Activated T-helper 1 cell treated with anti-CD3 and anti-CD28 coated beads, Interleukin-12 subunit alpha, Interleukin-12 subunit beta, Interleukin-2, Interleukin-4 antibody, amounts not matched to agents 30 ng/mL and 10 ng/mL and 1 ng/mL, durations not matched to agents 14 hours and 24 hours and 36 hours (primary cell): ENCODE measurements at regions of chr19 and their contacts with region 1.

Region 1: GRCh38 chr19:53520550-53521372 is 17.2 kb upstream of the ZNF331 start:
- DNase-seq: peak; percentile 81
- H3K4me3 Mint-ChIP-seq: peak overlapping the region; percentile 98
- H3K27ac Mint-ChIP-seq: peak overlapping the region; percentile 84
- H3K4me1 Mint-ChIP-seq: peaks cover 18% of the 10 kb centered on the region
- H3K27me3 Mint-ChIP-seq: no peaks in the 10 kb centered on the region

Region 2: DNA sequence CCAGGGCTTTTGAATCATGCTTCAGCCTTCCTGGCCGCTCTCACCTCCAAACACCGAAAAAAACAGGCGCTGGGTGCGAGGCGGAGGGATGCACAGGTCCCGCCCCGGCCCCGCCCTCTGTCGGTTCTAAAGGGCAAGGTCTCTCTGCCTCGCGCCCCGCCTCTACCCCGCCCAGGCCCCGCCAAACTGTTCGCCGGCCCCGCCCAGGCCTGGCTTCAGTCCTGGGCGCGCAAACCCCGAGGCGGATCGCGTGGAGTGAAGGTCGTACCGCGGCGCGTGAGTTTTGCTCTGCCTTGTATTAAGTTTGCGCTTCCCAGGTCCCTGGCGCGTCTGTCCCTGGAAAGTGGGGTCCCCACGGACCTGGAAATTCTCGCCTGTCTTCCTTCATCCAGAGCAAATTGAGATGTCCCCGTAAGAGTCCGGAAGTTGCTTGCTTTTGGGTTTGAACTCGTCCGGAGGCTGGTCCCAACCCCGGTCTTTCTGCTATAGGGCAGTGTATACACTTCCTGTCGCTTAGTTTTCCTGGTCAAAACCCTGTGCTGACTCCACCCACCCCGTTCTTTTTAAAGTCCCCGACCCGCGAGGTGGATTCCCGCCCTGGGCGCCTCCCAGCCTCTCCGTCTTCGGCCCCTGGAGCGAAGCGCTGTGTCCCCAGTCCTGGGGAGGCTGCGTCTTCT is 984.9 kb before region 1 on chr19:
- intact Hi-C with region 1: no loop called
- DNase-seq: peak; percentile 80
- H3K4me3 Mint-ChIP-seq: peak overlapping the region; percentile 84
- H3K27ac Mint-ChIP-seq: peak overlapping the region; percentile 88
- H3K4me1 Mint-ChIP-seq: peaks cover 11% of the 10 kb centered on the region
- H3K27me3 Mint-ChIP-seq: no peaks in the 10 kb centered on the region

Region 3: DNA sequence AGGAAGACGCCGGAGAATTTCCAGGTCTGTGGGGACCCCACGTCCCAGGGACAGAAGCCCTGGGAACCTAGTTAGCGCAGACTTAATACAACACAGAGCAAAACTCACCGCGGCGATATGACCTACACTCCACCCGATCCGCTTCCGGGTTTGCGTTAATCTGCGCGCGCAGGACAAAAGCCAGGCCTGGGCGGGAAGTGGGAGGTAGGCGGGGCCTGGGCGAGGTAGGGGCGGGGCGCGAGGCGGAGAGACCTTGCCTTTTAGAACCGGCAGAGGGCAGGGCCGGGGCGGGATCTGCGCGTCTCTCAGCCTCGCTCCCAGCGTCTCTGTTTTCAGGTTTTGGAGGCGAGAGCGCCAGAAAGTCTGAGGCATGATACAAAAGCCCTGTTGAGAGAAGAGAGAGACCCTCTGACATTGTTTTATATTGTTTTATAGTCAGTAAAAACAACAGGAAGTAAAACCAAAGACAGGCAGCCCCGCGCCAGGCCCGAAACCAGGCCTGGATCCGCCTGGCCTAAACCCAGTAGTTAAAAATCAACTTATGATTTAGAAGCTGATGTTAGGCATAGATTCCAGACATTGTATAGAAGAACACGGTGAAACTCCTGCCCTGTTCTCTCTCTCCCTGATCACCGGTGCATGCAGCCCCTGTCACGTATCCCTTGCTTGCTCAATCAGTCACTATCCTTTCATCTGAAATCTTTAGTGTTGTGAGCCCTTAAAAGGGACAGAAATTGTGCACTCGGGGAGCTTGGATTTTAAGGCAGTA is 785.7 kb before region 1 on chr19 and contains the start of gene ZNF611:
- intact Hi-C with region 1: loop called (anchors 2 kb)
- DNase-seq: peak; percentile 97
- H3K4me3 Mint-ChIP-seq: peak within 1 kb of the TSS; percentile 91
- H3K27ac Mint-ChIP-seq: peak within 1 kb of the TSS; percentile 92
- H3K4me1 Mint-ChIP-seq: peaks cover 27% of the 10 kb centered on the region
- H3K27me3 Mint-ChIP-seq: no peaks in the 10 kb centered on the region
- total RNA-seq, gene ZNF611: 17.0 and 21.0 TPM in 2 replicates

Region 4: GRCh38 chr19:53365134-53365898 is 155.4 kb before region 1 on chr19 and contains the start of gene ZNF525:
- intact Hi-C with region 1: loop called (anchors 1 kb)
- DNase-seq: peak; percentile 93
- H3K4me3 Mint-ChIP-seq: peak within 1 kb of the TSS; percentile 93
- H3K27ac Mint-ChIP-seq: peak within 1 kb of the TSS; percentile 91
- H3K4me1 Mint-ChIP-seq: peaks cover 17% of the 10 kb centered on the region
- H3K27me3 Mint-ChIP-seq: no peaks in the 10 kb centered on the region
- total RNA-seq, gene ZNF525: 16.5 and 19.0 TPM in 2 replicates

Region 5: DNA sequence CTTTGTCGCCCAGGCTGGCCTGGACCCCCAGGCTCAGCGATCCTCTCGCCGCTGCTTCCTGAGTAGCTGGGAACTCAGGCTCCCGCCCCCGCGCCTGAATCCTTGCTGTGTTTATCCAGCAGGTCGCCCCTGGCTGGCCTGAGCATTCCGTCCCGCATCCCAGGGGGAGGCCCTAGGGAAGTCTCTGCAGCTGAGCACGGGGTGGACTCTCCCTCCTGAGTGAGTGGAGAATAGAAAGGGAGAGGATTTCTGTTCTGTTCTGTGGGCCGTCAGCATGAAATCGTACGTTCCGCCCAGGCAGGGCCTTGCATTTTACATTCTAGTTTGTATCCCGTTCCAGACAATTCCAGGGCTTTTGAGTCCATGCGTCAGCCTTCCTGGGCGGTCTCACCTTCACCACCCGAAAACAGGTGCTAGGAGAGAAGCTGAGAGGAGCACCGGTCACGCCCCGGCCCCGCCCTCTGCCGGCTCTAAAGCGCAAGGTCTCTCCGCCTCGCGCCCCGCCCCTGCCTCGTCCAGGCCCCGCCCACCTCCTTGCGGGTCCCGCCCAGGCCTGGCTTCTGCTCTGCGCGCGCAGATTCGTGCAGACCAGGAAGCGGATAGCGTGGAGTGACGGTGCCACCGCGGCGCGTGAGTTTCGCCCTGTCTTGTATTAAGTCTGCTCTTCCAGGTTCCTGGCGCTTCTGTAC is 89.2 kb before region 1 on chr19 and contains the start of gene ZNF761:
- intact Hi-C with region 1: loop called (anchors 1 kb)
- DNase-seq: peak; percentile 96
- H3K4me3 Mint-ChIP-seq: peak within 1 kb of the TSS; percentile 88
- H3K27ac Mint-ChIP-seq: peak within 1 kb of the TSS; percentile 94
- H3K4me1 Mint-ChIP-seq: peaks cover 25% of the 10 kb centered on the region
- H3K27me3 Mint-ChIP-seq: no peaks in the 10 kb centered on the region
- total RNA-seq, gene ZNF761: 9.9 and 12.3 TPM in 2 replicates

Region 6: DNA sequence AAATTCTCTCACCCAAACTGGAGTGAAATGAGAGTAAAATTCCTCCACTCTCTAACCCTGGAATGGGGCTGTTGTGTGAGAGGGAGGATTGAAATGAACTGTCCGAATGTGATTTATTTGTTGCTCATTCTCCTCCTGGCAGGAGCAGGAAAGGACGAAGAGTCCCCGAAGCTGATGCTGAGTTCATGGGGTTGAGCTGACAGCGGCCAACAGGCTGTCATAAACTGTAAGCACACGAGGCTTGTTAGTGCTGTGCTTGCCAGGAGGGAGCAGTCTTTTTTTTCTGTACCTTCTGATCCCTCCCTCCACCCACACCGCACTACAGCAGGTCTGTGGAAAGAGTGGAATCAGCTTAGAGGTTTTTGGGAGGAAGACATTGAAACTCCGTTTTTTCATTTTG is 15.9 kb before region 1 on chr19:
- intact Hi-C with region 1: no loop called
- DNase-seq: no peak
- H3K4me3 Mint-ChIP-seq: no peak overlapping the region
- H3K27ac Mint-ChIP-seq: no peak overlapping the region
- H3K4me1 Mint-ChIP-seq: no peaks in the 10 kb centered on the region
- H3K27me3 Mint-ChIP-seq: no peaks in the 10 kb centered on the region

Region 7: DNA sequence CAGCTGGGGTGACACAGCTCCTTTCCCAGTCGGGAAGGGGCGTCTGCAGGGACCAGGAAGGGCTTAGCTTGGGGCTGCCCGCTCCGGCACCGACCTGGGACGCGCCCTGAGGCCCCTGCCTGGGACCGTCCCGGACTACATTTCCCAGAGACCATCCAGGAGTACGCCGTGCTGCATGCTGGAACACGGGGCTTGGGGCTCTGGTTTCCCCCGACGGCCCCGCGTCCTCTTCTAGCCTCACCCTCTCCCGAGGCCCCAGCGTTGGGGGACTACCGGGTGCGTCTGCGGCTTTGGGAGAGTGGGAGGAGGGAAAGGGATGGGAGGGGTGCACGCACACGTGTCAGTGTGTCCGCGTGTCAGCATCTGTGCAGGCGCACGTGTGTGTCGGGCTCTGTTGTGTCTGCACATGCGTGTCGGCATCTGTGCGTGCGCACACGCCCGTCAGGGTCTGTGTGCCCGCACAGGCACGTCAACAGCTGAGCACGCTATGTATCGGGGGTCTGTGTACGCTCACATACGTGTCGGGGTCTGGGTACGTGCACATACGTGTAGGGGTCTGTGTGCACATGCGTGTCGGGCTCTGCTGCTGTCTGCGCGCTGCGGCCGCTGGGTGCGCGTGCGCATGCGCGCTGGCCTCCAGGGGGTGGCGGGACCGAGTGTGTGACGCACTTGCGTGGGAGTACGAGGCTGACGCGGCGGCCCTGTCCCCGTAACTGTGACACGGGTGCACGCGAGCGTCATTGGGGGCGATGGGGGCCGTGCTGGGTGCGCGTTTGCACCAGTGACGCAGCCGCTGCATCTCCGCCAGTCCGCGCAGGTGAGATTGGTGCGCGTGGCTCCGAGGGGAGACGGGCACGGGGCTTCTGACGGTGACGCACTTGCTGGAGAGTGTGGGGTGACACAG is 17.0 kb after region 1 on chr19 and contains the start of gene ZNF331:
- intact Hi-C with region 1: loop called (anchors 1 kb)
- DNase-seq: peak; percentile 84
- H3K4me3 Mint-ChIP-seq: peak within 1 kb of the TSS; percentile 96
- H3K27ac Mint-ChIP-seq: peak within 1 kb of the TSS; percentile 97
- H3K4me1 Mint-ChIP-seq: no peaks in the 10 kb centered on the region
- H3K27me3 Mint-ChIP-seq: no peaks in the 10 kb centered on the region
- total RNA-seq, gene ZNF331: 17.9 and 19.6 TPM in 2 replicates

Region 8: GRCh38 chr19:53580976-53581800 is 60.4 kb after region 1 on chr19:
- intact Hi-C with region 1: no loop called
- DNase-seq: no peak
- H3K4me3 Mint-ChIP-seq: no peak overlapping the region
- H3K27ac Mint-ChIP-seq: no peak overlapping the region
- H3K4me1 Mint-ChIP-seq: no peaks in the 10 kb centered on the region
- H3K27me3 Mint-ChIP-seq: no peaks in the 10 kb centered on the region

Region 9: DNA sequence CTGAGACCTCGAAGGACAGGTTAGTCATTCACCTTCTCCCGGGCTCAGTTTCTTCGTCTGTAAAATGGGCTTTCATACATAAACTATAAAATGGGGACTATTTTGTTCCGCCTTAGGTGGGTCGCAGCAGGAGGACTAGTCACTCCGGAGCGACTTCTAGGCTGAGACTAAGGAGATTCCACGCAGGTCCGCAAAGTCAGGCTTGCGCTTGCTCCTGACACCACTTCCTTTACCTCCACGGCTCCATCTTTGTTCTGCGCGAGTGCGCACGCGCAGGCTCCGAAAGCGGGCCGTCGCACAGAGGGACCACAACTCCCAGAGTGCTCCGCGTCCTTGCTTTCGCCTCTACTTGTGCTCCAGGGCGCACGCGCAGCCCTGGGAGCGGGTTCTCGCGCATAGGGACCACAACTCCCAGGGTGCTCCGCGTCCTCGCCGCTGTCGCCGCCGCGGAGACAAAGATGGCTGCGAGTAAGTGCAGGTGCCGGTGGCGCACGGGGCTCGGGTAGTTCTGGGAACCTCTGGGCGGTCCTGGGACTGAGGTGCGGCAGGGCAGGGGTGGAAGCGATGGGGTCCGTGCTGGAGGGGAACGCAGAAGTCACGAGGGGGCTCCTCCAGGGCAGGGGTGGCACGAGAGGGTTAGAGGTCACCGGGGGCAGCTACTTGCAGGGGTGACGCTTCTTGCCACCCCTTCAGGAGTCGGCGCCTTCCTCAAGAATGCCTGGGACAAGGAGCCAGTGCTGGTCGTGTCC is 581.8 kb after region 1 on chr19 and contains the start of gene NDUFA3:
- intact Hi-C with region 1: loop called (anchors 2 kb)
- DNase-seq: peak; percentile 98
- H3K4me3 Mint-ChIP-seq: peak within 1 kb of the TSS; percentile 99
- H3K27ac Mint-ChIP-seq: peak within 1 kb of the TSS; percentile 87
- H3K4me1 Mint-ChIP-seq: peaks cover 17% of the 10 kb centered on the region
- H3K27me3 Mint-ChIP-seq: no peaks in the 10 kb centered on the region
- total RNA-seq, gene NDUFA3: 110 and 125 TPM in 2 replicates